Caco-2 (cell line): ENCODE measurements at regions of chr3 and their contacts with region 1.

Region 1: DNA sequence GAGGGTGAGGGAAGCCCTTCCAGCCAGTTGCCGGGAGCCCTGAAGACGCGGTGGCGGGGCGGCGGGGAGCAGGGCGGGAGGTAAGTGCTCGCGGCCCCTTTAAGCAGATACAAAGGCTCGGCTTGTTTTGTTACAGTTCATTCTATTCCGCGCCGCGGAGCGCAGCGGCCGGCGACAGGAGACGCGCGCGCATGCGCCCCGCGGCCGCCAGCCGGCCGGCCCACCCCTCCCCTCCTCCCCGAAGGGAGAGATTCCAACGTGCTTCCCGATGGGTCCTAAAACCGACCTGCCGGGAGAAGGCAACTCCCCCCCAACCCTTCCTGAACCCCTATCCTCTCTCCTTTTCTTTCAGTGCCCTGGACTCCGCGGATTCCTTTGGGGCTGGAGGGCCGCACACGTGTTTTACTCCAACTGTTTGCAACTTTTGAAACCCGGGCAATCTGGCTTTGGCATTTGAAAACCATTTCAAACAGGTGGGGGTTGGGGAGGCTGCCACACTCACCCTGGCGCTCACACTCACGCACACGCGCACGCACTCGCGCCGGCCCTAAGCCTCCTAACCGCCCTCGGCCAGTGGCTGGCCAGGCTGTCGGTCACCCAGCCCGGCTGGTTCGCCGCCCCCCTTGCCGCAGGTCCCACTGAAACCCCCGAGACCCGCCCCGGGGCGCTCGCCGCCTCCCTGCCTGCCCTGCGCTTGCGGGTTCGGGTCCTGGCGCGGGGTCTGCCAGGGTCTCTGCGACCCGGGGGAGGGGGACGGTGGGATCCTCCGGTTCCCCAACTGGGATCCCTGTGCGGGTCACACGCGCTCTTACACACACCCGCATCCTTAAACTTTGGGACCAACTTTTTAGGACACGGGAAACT is at the start of gene MAGI1:
- DNase-seq: peak; percentile 94 to 95
- H3K4me3 ChIP-seq: peak within 1 kb of the TSS; percentile 70
- H3K4me3 Mint-ChIP-seq: peak within 1 kb of the TSS; percentile 95
- H3K27ac Mint-ChIP-seq: peak within 1 kb of the TSS; percentile 94
- H3K4me1 ChIP-seq: peaks cover 4% of the 10 kb centered on the region; the same call in 1 of the 2 replicates
- H3K4me1 Mint-ChIP-seq: peaks cover 13% of the 10 kb centered on the region
- H3K27me3 ChIP-seq: no peaks in the 10 kb centered on the region
- H3K27me3 Mint-ChIP-seq: no peaks in the 10 kb centered on the region
- CTCF ChIP-seq: no peak
- total RNA-seq, gene MAGI1: 63.6 and 64.9 TPM in 2 replicates

Region 2: DNA sequence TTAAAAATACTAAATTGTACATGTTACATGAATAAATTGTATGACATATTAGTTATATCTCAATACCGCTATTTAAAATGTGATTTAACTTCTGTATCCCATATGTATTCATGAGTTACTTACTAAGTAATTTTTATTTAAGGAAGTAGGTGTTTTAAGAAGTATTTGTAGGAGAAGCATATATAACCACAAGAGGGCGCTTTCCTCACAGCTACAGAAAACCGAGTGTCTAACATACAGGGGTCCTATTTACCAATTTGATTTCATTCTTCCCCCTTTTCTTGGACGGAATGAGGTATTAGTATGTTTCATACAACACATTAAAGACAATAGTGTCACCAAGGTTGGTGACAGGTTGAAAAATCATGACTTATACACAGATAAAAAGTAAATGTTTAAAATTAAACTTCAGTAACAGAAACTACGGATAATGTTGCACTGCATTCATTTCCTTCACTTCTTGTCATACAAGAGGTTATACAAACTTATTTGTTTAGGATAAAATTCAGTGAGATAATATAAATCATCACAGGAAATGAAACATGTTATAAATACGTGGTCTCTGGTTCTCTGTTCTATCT is 253.8 kb before region 1 on chr3:
- CTCF ChIA-PET with region 1: no interaction called
- POLR2A ChIA-PET with region 1: no interaction called
- intact Hi-C with region 1: loop called (anchors 10 kb)
- DNase-seq: peak in 1 of 2 experiments; percentile 46
- H3K4me3 ChIP-seq: no peak overlapping the region
- H3K4me3 Mint-ChIP-seq: no peak overlapping the region
- H3K27ac Mint-ChIP-seq: no peak overlapping the region
- H3K4me1 ChIP-seq: no peaks in the 10 kb centered on the region; the same call in 1 of the 2 replicates
- H3K4me1 Mint-ChIP-seq: peaks cover 11% of the 10 kb centered on the region
- H3K27me3 ChIP-seq: no peaks in the 10 kb centered on the region
- H3K27me3 Mint-ChIP-seq: no peaks in the 10 kb centered on the region
- CTCF ChIP-seq: peak; percentile 51 to 69

Region 3: GRCh38 chr3:66083784-66084213 is 44.8 kb after region 1 on chr3:
- CTCF ChIA-PET with region 1: interaction called, 3 read pairs
- POLR2A ChIA-PET with region 1: no interaction called
- intact Hi-C with region 1: loop called (anchors 2 kb)
- DNase-seq: peak; percentile 72 to 78
- H3K4me3 ChIP-seq: no peak overlapping the region
- H3K4me3 Mint-ChIP-seq: no peak overlapping the region
- H3K27ac Mint-ChIP-seq: peak overlapping the region; percentile 53
- H3K4me1 ChIP-seq: peaks cover 21% of the 10 kb centered on the region
- H3K4me1 Mint-ChIP-seq: peaks cover 10% of the 10 kb centered on the region
- H3K27me3 ChIP-seq: no peaks in the 10 kb centered on the region
- H3K27me3 Mint-ChIP-seq: no peaks in the 10 kb centered on the region
- CTCF ChIP-seq: no peak

Region 4: DNA sequence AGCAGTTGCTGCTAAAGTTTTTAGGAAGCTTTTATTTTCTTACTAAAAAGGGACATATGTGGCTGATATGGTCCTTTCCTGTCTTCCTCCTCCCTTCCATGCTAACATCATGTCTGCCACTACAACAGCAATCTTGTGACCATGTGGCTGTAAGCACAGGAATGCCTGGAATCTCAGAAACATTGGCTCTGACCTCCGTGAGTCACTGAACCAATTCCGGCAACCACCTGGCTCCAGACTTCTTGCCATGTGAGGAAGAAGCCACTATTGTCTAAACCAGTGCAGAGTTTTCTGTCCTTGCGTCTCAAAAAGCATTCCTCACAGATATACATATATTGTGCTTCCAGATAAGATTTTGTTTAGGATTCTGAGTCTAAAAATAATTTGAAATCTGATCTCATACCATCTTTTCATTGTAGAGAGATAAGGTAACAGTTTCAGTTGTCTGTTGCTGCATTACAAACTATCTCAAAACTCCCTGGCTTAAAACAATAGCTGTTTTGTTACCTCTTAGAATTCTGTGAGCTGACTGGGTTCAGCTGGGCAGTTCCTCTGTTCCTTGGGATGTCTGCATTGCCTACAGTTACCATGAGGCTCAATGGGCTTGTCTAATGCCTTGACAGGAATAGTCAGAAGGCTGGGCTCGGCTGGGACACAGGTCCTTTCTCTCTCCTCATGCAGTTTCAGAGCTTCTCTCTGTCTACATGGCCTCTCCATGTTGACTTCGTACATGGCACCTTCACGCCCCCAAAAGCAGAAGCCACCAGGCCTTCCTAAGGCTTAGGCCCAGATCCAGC is 77.1 kb after region 1 on chr3:
- CTCF ChIA-PET with region 1: no interaction called
- POLR2A ChIA-PET with region 1: no interaction called
- intact Hi-C with region 1: loop called (anchors 5 kb)
- DNase-seq: peak; percentile 75 to 84
- H3K4me3 ChIP-seq: no peak overlapping the region
- H3K4me3 Mint-ChIP-seq: peak overlapping the region; percentile 50
- H3K27ac Mint-ChIP-seq: peak overlapping the region; percentile 86
- H3K4me1 ChIP-seq: peaks cover 23% of the 10 kb centered on the region
- H3K4me1 Mint-ChIP-seq: peaks cover 23% of the 10 kb centered on the region
- H3K27me3 ChIP-seq: no peaks in the 10 kb centered on the region
- H3K27me3 Mint-ChIP-seq: no peaks in the 10 kb centered on the region
- CTCF ChIP-seq: no peak

Region 5: DNA sequence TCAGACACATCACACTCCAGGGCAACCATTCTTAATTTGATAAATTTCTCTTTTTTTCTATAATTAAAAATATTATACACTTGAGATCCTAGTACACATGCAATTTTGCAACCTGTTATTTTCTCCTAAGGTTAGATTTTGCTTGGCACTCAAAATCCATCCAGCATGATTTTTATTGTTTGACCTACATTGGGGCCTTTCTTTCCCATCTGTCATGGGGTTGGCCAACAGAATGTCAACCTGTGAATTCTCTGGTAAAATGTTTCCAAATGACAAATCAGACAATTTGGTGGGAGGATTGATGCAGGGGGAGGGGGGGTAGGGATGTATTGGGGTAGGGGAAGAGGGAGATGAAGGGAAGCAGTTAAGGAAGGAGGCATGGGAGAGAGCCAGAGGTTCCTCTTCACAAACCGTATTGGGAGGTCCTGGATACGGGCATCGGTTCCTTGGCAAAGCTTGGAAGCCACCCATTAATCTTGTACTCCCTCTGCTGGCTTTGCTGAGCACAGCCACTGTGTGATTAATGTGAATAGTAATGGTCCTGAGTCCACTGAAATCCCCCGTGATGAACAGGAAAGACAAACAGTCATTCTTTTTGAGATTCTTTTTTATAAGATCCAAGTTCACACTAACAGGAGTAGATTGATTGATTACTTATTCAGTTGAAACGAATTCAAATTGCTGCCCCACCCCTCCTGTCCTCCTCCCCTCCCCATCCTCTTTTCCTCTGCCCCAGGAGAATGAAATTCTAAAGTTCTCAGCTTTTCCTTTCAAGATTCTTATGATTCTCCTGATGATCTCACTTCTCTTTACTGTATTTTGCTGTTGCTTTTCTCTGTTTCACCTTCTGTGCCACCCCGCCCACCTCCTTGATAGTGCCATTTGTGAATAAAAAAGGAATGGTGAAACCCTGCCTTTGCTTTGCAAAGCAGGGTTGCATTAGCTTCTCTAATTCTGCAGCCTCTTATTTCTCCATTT is 99.7 kb after region 1 on chr3:
- CTCF ChIA-PET with region 1: interaction called, 6 read pairs
- POLR2A ChIA-PET with region 1: no interaction called
- intact Hi-C with region 1: loop called (anchors 1 kb)
- DNase-seq: peak; percentile 55 to 69
- H3K4me3 ChIP-seq: no peak overlapping the region
- H3K4me3 Mint-ChIP-seq: no peak overlapping the region
- H3K27ac Mint-ChIP-seq: no peak overlapping the region
- H3K4me1 ChIP-seq: peaks cover 9% of the 10 kb centered on the region
- H3K4me1 Mint-ChIP-seq: peaks cover 15% of the 10 kb centered on the region
- H3K27me3 ChIP-seq: no peaks in the 10 kb centered on the region
- H3K27me3 Mint-ChIP-seq: no peaks in the 10 kb centered on the region
- CTCF ChIP-seq: peak; percentile 56 to 70

Region 6: GRCh38 chr3:66195347-66195783 is 156.4 kb after region 1 on chr3:
- CTCF ChIA-PET with region 1: no interaction called
- POLR2A ChIA-PET with region 1: no interaction called
- intact Hi-C with region 1: loop called (anchors 5 kb)
- DNase-seq: peak; percentile 58 to 62
- H3K4me3 ChIP-seq: peak overlapping the region; percentile 9
- H3K4me3 Mint-ChIP-seq: peak overlapping the region; percentile 45
- H3K27ac Mint-ChIP-seq: no peak overlapping the region
- H3K4me1 ChIP-seq: no peaks in the 10 kb centered on the region
- H3K4me1 Mint-ChIP-seq: no peaks in the 10 kb centered on the region
- H3K27me3 ChIP-seq: no peaks in the 10 kb centered on the region
- H3K27me3 Mint-ChIP-seq: no peaks in the 10 kb centered on the region
- CTCF ChIP-seq: no peak

Region 7: DNA sequence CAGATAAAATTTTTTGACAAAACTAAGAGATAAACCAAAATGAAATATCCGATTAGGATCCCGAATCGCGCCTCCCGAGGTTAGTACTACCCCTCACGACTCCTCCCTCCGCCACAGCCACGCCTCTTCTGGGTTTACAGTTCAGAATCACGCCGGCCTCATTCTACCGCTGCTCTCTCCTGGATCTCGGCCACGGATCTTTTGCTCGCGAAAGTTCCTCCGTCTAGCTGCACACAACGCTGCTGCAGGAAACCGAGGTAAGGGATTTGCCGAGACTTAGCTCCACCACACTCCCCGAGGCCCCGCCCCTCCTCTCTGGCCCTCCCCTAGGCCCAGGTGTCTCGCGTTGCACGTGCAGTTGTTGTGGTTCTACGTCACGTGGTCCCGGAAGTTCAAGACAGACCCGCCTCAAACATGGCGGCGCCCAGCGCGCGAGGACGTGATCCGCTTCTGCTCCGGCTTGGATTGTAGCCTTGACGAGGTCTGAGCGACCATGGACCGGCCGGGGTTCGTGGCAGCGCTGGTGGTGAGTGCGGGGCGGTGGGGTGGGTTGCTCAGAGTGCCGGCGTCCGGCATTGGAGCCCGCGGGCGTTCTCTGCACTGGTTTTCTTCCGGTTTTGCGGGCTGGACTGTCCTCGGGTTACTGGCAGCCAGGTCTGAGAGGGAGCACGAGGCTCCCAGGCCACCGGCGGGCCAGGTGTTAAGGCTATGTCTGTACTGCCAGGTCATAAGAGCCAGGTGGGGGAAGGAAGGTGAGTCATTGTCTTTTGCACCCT is 181.8 kb after region 1 on chr3 and contains the start of gene SLC25A26:
- CTCF ChIA-PET with region 1: no interaction called
- POLR2A ChIA-PET with region 1: no interaction called
- intact Hi-C with region 1: loop called (anchors 2 kb)
- DNase-seq: peak; percentile 95 to 97
- H3K4me3 ChIP-seq: peak within 1 kb of the TSS; percentile 72
- H3K4me3 Mint-ChIP-seq: peak within 1 kb of the TSS; percentile 85
- H3K27ac Mint-ChIP-seq: peak within 1 kb of the TSS; percentile 81
- H3K4me1 ChIP-seq: no peaks in the 10 kb centered on the region; the same call in 1 of the 2 replicates
- H3K4me1 Mint-ChIP-seq: peaks cover 17% of the 10 kb centered on the region
- H3K27me3 ChIP-seq: no peaks in the 10 kb centered on the region
- H3K27me3 Mint-ChIP-seq: no peaks in the 10 kb centered on the region
- CTCF ChIP-seq: no peak
- total RNA-seq, gene SLC25A26: 25.4 and 26.3 TPM in 2 replicates